ENCODE measurements at regions of chr1 and their contacts with region 1.

Region 1: DNA sequence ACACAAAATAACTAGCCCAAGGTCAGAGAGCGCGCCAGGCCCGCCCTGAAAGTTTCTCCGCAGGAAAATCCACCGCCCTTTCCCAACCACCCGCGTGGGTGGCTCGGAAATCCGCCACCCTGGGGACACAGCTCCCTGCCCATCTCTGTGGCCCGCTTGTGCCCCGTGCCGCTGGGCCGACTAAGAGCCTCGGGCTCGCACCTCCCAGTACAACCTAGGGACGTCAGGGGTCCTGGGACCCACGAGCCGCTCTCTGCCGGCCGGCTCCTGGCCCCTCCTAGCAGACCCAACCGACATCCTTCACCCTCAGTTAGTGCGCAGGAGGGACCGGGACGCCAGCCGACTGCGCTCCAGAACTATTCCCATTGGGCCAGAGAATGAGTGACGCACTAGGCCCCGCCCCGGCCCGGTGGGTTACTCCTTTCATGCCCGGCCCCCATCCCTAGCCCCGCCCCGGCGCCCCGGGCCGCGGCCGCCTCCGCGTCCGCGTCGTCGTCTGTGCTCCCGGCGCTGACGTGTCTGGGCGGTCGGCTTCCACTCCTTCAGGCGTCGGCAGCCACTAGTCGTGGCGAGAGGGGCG is 395 bp upstream of the UAP1 start:
- H3K4me3 Mint-ChIP-seq: peak overlapping the region; percentile 97
- H3K27ac Mint-ChIP-seq: peak overlapping the region; percentile 98
- H3K4me1 Mint-ChIP-seq: peaks cover 35% of the 10 kb centered on the region
- H3K27me3 Mint-ChIP-seq: no peaks in the 10 kb centered on the region

Region 2: DNA sequence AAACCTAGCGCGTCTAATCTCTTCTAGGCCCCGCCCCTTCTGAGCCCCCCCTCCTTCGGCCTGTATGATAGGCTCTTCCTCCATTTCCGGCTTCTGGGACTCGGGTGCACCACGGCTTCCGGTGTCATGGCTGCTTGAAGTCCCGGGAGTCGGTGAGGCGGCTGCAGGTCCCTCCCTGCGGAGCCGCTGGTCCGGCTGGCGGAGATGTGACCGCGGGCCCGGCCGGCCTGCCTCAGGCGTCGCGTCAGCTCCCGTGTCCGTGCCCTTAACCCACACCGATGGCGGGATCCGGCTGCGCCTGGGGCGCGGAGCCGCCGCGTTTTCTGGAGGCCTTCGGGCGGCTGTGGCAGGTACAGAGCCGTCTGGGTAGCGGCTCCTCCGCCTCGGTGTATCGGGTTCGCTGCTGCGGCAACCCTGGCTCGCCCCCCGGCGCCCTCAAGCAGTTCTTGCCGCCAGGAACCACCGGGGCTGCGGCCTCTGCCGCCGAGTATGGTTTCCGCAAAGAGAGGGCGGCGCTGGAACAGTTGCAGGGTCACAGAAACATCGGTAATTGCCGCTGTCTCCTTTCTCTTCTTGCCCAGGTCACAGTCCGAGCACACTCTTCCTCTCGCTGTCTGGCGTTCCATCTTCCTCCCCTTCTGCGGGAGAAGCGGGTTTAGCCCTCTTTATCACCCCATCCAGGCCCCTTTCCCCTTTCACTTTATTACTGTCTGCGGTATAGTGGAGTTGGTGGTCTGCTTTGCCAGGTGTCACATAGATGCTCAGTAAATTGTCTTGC is 63.2 kb before region 1 on chr1 and contains the start of gene UHMK1:
- intact Hi-C with region 1: loop called (anchors 2 kb)
- H3K4me3 Mint-ChIP-seq: peak within 1 kb of the TSS; percentile 88
- H3K27ac Mint-ChIP-seq: peak within 1 kb of the TSS; percentile 90
- H3K4me1 Mint-ChIP-seq: peaks cover 11% of the 10 kb centered on the region
- H3K27me3 Mint-ChIP-seq: peaks cover 7% of the 10 kb centered on the region

Region 3: DNA sequence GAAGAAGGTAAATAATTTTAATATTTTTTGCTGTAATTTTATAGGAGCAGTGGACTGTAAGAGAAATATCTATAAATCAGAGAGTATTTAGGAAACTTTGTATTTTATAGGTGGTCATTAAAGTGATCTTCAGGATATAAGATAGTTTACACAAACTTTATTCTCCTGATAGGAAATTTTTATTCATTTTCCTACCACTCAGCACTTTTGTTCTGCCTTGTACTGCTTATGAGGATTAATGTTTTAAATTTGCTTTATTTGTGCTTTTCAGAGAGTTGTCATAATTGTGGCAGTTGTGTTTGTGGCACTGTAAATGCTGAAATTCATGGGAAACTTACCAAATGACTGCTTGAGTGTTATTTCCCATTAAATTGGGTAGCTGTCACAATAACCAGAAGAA is 33.8 kb before region 1 on chr1:
- intact Hi-C with region 1: loop called (anchors 5 kb)
- H3K4me3 Mint-ChIP-seq: no peak overlapping the region
- H3K27ac Mint-ChIP-seq: no peak overlapping the region
- H3K4me1 Mint-ChIP-seq: peaks cover 21% of the 10 kb centered on the region
- H3K27me3 Mint-ChIP-seq: no peaks in the 10 kb centered on the region

Region 4: GRCh38 chr1:163561580-163562295 is 1000.6 kb after region 1 on chr1:
- intact Hi-C with region 1: no loop called
- H3K4me3 Mint-ChIP-seq: no peak overlapping the region
- H3K27ac Mint-ChIP-seq: no peak overlapping the region
- H3K4me1 Mint-ChIP-seq: no peaks in the 10 kb centered on the region
- H3K27me3 Mint-ChIP-seq: no peaks in the 10 kb centered on the region

Measured in dendritic cell treated with granulocyte-macrophage colony-stimulating factor and Interleukin-4, amounts not matched to agents 40 ng/mL and 50 ng/mL, for 4 days (primary cell).